ENCODE measurements at regions of chrX and their contacts with region 1.

Region 1: GRCh38 chrX:24395775-24396174 is 35.3 kb downstream of the SUPT20HL1 start:
- DNase-seq: peak; percentile 28
- ATAC-seq: peak; percentile 76
- H3K4me3 ChIP-seq: no peak overlapping the region
- H3K27ac ChIP-seq: no peak overlapping the region
- H3K4me1 ChIP-seq: no peaks in the 10 kb centered on the region
- H3K27me3 ChIP-seq: no peaks in the 10 kb centered on the region
- CTCF ChIP-seq: peak; percentile 73

Region 2: DNA sequence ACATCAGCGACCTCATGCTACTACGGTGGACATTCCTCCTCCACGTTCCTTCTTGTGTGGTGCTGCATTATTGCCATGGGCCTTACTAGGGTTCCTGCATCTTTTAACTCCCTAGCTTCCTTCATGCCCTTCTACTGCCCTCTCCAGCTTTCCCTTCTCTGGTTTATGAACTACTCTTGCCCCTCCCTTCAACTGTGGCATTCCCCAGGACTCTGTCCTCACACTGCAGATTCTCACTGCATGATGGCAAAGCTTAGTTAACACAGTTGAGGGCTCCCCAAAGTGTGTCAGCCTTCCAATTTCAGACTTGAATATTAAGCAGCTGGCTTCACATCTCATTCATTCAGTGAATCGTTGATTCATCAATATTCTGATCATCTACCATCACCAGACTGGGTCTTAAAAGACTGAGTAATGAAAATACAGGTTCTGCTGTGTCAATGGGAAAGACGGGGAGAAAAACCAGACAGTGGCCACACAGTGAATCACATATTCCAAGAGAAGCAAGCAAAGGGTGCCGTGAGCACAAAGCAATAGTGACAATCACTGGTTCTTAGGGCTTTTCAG is 193.2 kb before region 1 on chrX:
- CTCF ChIA-PET with region 1: no interaction called
- POLR2A ChIA-PET with region 1: no interaction called
- in situ Hi-C with region 1: no loop called
- intact Hi-C with region 1: no loop called
- DNase-seq: no peak
- ATAC-seq: no peak
- H3K4me3 ChIP-seq: no peak overlapping the region
- H3K27ac ChIP-seq: no peak overlapping the region
- H3K4me1 ChIP-seq: 0 out of 2 replicates have a peak, but pooled peaks cover 2% of the 10 kb centered on the region
- H3K27me3 ChIP-seq: no peaks in the 10 kb centered on the region
- CTCF ChIP-seq: no peak

Region 3: GRCh38 chrX:24498975-24499374 is 103.2 kb after region 1 on chrX:
- CTCF ChIA-PET with region 1: interaction called, 20 read pairs
- POLR2A ChIA-PET with region 1: no interaction called
- in situ Hi-C with region 1: no loop called
- intact Hi-C with region 1: loop called (anchors 1 kb)
- DNase-seq: no peak
- ATAC-seq: no peak
- H3K4me3 ChIP-seq: no peak overlapping the region
- H3K27ac ChIP-seq: no peak overlapping the region
- H3K4me1 ChIP-seq: no peaks in the 10 kb centered on the region
- H3K27me3 ChIP-seq: no peaks in the 10 kb centered on the region
- CTCF ChIP-seq: no peak; the same call in 1 of the 2 replicates

Region 4: DNA sequence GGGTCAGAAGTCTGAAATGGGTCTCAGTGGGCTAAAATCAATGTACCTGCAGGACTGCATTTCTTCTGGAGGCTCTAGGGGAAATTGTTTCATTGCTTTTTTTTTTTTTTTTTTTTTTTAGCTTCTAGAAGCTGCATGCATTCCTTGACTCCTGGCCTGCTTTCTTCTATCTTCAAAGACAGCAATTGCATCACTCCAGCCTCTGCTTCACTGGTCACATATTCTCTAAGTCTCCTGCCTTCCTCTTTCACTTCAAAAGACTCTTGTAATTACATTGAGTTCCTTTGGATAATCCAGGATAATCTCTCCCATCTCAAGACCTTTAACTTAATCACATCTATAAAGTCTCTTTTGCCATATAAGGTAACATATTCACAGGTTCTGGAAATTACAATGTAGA is 262.6 kb after region 1 on chrX:
- CTCF ChIA-PET with region 1: no interaction called
- POLR2A ChIA-PET with region 1: interaction called, 18 read pairs
- in situ Hi-C with region 1: no loop called
- intact Hi-C with region 1: no loop called
- DNase-seq: no peak
- ATAC-seq: no peak
- H3K4me3 ChIP-seq: no peak overlapping the region
- H3K27ac ChIP-seq: no peak overlapping the region
- H3K4me1 ChIP-seq: no peaks in the 10 kb centered on the region
- H3K27me3 ChIP-seq: no peaks in the 10 kb centered on the region
- CTCF ChIP-seq: no peak

Measured in Panc1 (cell line).